Activated naive CD4-positive, alpha-beta T cell treated with anti-CD3 and anti-CD28 coated beads for 36 hours (primary cell): ENCODE measurements at regions of chr21 and their contacts with region 1.

Region 1: DNA sequence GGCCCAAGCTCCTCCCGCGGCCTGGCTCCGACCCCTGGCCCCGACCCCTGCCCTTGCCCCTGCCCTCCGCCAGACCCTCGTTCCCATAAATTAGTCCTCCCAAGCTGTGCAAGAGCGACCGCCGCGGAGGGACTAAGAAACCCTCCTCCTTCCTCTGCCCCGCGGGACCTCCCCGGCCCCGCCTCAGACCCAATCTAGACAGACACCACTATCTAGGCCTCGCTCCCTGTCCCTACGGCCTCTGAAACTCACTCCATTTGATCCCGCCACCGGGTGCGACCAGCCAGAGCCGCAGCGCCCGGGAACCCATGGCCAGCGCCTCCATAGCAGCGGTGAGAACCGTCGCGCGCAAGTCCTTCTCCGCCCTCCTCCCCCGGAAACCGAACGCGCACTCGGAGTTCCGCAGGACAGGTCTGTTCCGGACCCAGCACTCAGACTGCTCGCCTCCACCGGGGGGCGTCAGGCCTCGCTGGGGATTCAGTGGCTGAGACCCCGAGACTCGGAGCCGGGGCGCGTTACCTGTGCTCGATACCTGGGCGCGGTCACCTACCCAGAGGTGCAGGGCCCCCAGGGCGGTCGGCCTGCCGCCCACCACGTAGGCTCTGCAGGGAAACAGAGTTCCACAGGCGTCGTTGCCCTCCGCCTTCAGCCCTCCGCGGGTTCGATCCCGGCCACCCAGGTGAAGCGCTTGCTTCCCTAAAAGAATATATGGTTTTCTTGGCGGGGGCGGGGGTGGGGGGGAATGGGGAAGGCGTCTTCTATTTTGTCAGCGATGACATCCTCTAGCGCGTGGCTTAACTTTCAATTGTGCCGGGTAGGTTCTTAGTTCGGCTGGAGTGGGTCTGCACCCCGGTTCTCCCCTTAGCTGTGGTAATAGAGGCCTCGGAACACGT is at the start of gene MRPL39:
- DNase-seq: peak; percentile 93
- H3K4me3 Mint-ChIP-seq: peak within 1 kb of the TSS; percentile 94
- H3K27ac Mint-ChIP-seq: peak within 1 kb of the TSS; percentile 95
- H3K4me1 Mint-ChIP-seq: peaks cover 35% of the 10 kb centered on the region
- H3K27me3 Mint-ChIP-seq: no peaks in the 10 kb centered on the region
- total RNA-seq, gene MRPL39: 71.4 to 75.8 TPM

Region 2: DNA sequence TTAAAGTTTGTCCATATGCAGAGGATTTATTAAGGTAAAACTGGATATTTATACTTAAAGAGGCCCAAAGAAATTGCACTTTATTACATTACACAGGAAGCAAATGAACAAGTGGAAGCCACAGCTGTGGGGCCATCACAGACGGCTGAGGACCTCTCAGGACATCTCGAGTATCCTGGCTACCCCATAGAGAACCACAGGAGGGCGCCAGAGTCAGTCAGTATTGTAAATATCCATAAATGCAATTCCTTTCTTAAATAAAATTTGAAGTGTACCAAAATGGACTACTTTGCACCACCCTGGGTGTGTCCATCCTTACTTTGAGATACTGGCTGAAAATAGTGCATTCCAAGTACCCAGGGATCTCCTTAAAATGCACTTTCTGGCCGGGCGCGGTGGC is 257.3 kb before region 1 on chr21:
- CTCF ChIA-PET with region 1: no interaction called
- intact Hi-C with region 1: loop called (anchors 1 kb)
- DNase-seq: peak; percentile 66
- H3K4me3 Mint-ChIP-seq: no peak overlapping the region
- H3K27ac Mint-ChIP-seq: no peak overlapping the region
- H3K4me1 Mint-ChIP-seq: peaks cover 7% of the 10 kb centered on the region
- H3K27me3 Mint-ChIP-seq: peaks cover 27% of the 10 kb centered on the region

Region 3: DNA sequence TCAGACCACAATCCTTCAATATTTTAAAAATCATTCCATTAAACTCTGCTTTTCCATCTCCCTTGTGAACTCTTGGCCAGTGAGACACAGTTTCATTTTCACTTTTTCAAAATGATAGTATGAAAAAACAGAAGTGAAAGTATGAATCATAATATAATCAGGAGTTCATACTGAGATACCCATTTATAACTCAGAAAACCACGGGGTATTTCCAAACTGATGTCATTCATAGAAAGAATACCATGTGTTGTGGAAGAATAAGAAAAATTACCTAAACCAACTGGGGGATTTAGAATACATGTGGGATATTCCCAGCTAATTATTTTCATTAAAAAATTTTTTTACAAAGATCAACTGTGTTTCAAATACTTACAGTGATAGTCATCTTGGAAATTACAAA is 150.0 kb before region 1 on chr21:
- CTCF ChIA-PET with region 1: no interaction called
- intact Hi-C with region 1: loop called (anchors 1 kb)
- DNase-seq: no peak
- H3K4me3 Mint-ChIP-seq: peak overlapping the region; percentile 48
- H3K27ac Mint-ChIP-seq: peak overlapping the region; percentile 84
- H3K4me1 Mint-ChIP-seq: peaks cover 74% of the 10 kb centered on the region
- H3K27me3 Mint-ChIP-seq: no peaks in the 10 kb centered on the region

Region 4: DNA sequence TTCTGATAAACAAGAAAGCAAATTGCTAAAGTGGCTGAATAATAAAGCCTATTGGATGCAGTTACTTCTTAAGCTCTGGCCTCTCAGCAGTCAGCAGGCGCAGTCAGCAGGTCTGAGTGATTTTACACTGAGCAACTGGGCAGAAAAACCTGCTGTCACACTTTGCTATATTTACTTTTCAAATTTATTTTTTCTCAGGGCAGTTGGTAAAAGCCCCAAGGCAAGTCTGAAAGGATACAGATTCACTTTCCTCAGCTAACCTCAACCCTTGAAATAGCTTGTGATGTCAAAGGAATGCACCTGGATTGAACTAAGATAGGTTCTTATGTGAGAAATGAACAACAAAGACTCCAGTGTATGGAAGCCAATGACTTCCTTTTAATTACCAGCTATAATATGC is 93.3 kb after region 1 on chr21:
- CTCF ChIA-PET with region 1: interaction called, 62 read pairs
- intact Hi-C with region 1: no loop called
- DNase-seq: no peak
- H3K4me3 Mint-ChIP-seq: no peak overlapping the region
- H3K27ac Mint-ChIP-seq: no peak overlapping the region
- H3K4me1 Mint-ChIP-seq: no peaks in the 10 kb centered on the region
- H3K27me3 Mint-ChIP-seq: no peaks in the 10 kb centered on the region

Region 5: GRCh38 chr21:25790122-25790877 is 182.9 kb after region 1 on chr21:
- CTCF ChIA-PET with region 1: interaction called, 3 read pairs
- intact Hi-C with region 1: loop called (anchors 1 kb)
- DNase-seq: peak; percentile 43
- H3K4me3 Mint-ChIP-seq: peak overlapping the region; percentile 66
- H3K27ac Mint-ChIP-seq: peak overlapping the region; percentile 22
- H3K4me1 Mint-ChIP-seq: peaks cover 11% of the 10 kb centered on the region
- H3K27me3 Mint-ChIP-seq: peaks cover 4% of the 10 kb centered on the region

Region 6: GRCh38 chr21:25862596-25862995 is 255.2 kb after region 1 on chr21:
- CTCF ChIA-PET with region 1: interaction called, 5 read pairs
- intact Hi-C with region 1: loop called (anchors 1 kb)
- DNase-seq: peak; percentile 49
- H3K4me3 Mint-ChIP-seq: no peak overlapping the region
- H3K27ac Mint-ChIP-seq: no peak overlapping the region
- H3K4me1 Mint-ChIP-seq: no peaks in the 10 kb centered on the region
- H3K27me3 Mint-ChIP-seq: no peaks in the 10 kb centered on the region

Region 7: GRCh38 chr21:26469789-26470188 is 862.4 kb after region 1 on chr21:
- CTCF ChIA-PET with region 1: no interaction called
- intact Hi-C with region 1: loop called (anchors 5 kb)
- DNase-seq: no peak
- H3K4me3 Mint-ChIP-seq: no peak overlapping the region
- H3K27ac Mint-ChIP-seq: no peak overlapping the region
- H3K4me1 Mint-ChIP-seq: peaks cover 12% of the 10 kb centered on the region
- H3K27me3 Mint-ChIP-seq: no peaks in the 10 kb centered on the region